B cell (primary cell): ENCODE measurements at regions of chr7 and their contacts with region 1.

Region 1: DNA sequence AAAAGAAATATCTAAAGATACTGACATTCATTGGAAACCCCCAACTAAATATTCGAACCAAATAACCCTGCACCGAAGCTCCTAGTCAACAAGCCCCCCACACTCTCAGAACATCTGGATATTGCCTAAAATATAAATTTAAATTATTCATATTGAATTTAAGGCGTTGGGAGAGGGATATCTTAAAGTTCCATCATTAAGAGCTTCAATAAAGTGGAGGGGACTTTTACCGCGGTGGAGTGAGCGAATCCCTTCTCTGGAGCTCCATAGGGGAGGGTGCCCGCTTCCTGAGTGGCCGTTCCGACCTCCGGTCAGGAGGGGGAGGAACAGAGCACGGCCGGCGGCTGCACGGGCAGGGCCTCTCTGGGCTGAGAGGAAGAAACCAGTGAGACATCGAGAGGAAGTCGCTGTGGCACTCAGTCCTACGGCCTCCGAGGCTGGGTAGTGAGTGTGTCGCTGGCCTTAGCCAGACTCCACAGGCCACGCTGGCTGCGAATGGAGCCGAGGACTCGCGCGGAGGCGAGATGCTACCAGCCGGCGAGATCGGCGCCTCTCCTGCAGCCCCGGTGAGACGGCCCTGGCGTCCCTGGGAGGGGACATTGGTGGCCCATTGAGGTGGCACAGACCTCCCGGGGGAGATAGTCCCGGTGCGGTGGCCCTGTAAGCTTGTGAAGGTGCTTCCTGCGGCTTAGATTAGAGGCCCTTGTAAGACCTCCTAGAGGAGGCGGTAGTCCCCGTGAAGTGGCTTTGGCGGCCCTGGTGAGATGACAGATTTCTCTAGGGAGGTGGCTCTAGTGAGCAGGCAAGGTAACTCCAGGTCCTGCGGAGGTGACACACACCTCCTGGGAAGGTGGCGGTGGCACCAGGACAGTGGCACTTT is at the start of gene RINT1:
- DNase-seq: peak; percentile 95
- ATAC-seq: peak; percentile 97
- H3K4me3 ChIP-seq: peak within 1 kb of the TSS; percentile 81 to 98 (median 88)
- H3K4me3 Mint-ChIP-seq: peak within 1 kb of the TSS; percentile 92
- H3K27ac ChIP-seq: peak within 1 kb of the TSS; percentile 74 to 91
- H3K27ac Mint-ChIP-seq: peak within 1 kb of the TSS; percentile 97
- H3K4me1 ChIP-seq: peaks cover 18 to 22% of the 10 kb centered on the region in 2 donors
- H3K4me1 Mint-ChIP-seq: peaks cover 24% of the 10 kb centered on the region
- H3K27me3 ChIP-seq: no peaks in the 10 kb centered on the region
- H3K27me3 Mint-ChIP-seq: no peaks in the 10 kb centered on the region
- CTCF ChIP-seq: peak; percentile 84
- total RNA-seq, gene RINT1: 27.2 and 28.0 TPM in 2 replicates

Region 2: GRCh38 chr7:104207731-104208420 is 1324.2 kb before region 1 on chr7 and contains the start of gene ORC5:
- CTCF ChIA-PET with region 1: no interaction called
- POLR2A ChIA-PET with region 1: no interaction called
- intact Hi-C with region 1: loop called (anchors 1 kb)
- DNase-seq: peak; percentile 84
- ATAC-seq: peak; percentile 100
- H3K4me3 ChIP-seq: peak within 1 kb of the TSS; percentile 86 to 98 (median 90)
- H3K4me3 Mint-ChIP-seq: peak within 1 kb of the TSS; percentile 95
- H3K27ac ChIP-seq: peak within 1 kb of the TSS; percentile 55 to 83
- H3K27ac Mint-ChIP-seq: peak within 1 kb of the TSS; percentile 90
- H3K4me1 ChIP-seq: peaks cover 12 to 14% of the 10 kb centered on the region in 2 donors
- H3K4me1 Mint-ChIP-seq: peaks cover 28% of the 10 kb centered on the region
- H3K27me3 ChIP-seq: no peaks in the 10 kb centered on the region
- H3K27me3 Mint-ChIP-seq: peaks cover 14% of the 10 kb centered on the region
- CTCF ChIP-seq: no peak
- total RNA-seq, gene ORC5: 18.1 and 20.2 TPM in 2 replicates

Region 3: GRCh38 chr7:104299323-104299722 is 1232.7 kb before region 1 on chr7:
- CTCF ChIA-PET with region 1: no interaction called
- POLR2A ChIA-PET with region 1: no interaction called
- intact Hi-C with region 1: no loop called
- DNase-seq: no peak
- ATAC-seq: no peak
- H3K4me3 ChIP-seq: no peak overlapping the region
- H3K4me3 Mint-ChIP-seq: no peak overlapping the region
- H3K27ac ChIP-seq: no peak overlapping the region
- H3K27ac Mint-ChIP-seq: no peak overlapping the region
- H3K4me1 ChIP-seq: no peaks in the 10 kb centered on the region
- H3K4me1 Mint-ChIP-seq: no peaks in the 10 kb centered on the region
- H3K27me3 ChIP-seq: no peaks in the 10 kb centered on the region
- H3K27me3 Mint-ChIP-seq: peaks cover 11% of the 10 kb centered on the region
- CTCF ChIP-seq: no peak

Region 4: GRCh38 chr7:105352018-105352612 is 179.9 kb before region 1 on chr7:
- CTCF ChIA-PET with region 1: no interaction called
- POLR2A ChIA-PET with region 1: no interaction called
- intact Hi-C with region 1: loop called (anchors 5 kb)
- DNase-seq: peak; percentile 90
- ATAC-seq: peak; percentile 88
- H3K4me3 ChIP-seq: peak overlapping the region; percentile 0 to 41 (median 32)
- H3K4me3 Mint-ChIP-seq: peak overlapping the region; percentile 82
- H3K27ac ChIP-seq: peak overlapping the region; percentile 75 to 80
- H3K27ac Mint-ChIP-seq: peak overlapping the region; percentile 99
- H3K4me1 ChIP-seq: peaks cover 84 to 91% of the 10 kb centered on the region in 2 donors
- H3K4me1 Mint-ChIP-seq: peaks cover 64% of the 10 kb centered on the region
- H3K27me3 ChIP-seq: no peaks in the 10 kb centered on the region
- H3K27me3 Mint-ChIP-seq: no peaks in the 10 kb centered on the region
- CTCF ChIP-seq: no peak

Region 5: DNA sequence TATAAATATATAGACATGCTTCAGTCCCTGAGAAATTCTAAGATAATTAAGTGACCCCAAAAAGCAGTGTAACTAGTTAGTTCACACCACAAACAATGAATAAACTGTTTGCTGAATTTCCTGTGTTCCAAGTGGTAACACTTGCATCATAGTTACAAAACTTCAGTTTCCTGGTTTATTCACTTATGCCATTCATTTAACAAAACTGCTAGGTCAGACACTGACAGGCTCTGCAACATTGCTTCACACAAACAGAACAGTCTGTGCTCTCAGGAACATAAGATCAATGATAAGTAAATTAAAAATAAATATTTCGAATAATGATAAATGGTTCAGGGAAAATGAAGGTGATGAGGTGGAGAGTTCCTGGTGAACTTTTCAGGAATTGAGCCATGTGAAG is 886.1 kb after region 1 on chr7:
- CTCF ChIA-PET with region 1: no interaction called
- POLR2A ChIA-PET with region 1: no interaction called
- intact Hi-C with region 1: no loop called
- DNase-seq: no peak
- ATAC-seq: no peak
- H3K4me3 ChIP-seq: no peak overlapping the region
- H3K4me3 Mint-ChIP-seq: no peak overlapping the region
- H3K27ac ChIP-seq: no peak overlapping the region
- H3K27ac Mint-ChIP-seq: no peak overlapping the region
- H3K4me1 ChIP-seq: no peaks in the 10 kb centered on the region
- H3K4me1 Mint-ChIP-seq: no peaks in the 10 kb centered on the region
- H3K27me3 ChIP-seq: no peaks in the 10 kb centered on the region
- H3K27me3 Mint-ChIP-seq: peaks cover 17% of the 10 kb centered on the region
- CTCF ChIP-seq: no peak